B cell (primary cell): ENCODE measurements at regions of chr2 and their contacts with region 1.

Region 1: DNA sequence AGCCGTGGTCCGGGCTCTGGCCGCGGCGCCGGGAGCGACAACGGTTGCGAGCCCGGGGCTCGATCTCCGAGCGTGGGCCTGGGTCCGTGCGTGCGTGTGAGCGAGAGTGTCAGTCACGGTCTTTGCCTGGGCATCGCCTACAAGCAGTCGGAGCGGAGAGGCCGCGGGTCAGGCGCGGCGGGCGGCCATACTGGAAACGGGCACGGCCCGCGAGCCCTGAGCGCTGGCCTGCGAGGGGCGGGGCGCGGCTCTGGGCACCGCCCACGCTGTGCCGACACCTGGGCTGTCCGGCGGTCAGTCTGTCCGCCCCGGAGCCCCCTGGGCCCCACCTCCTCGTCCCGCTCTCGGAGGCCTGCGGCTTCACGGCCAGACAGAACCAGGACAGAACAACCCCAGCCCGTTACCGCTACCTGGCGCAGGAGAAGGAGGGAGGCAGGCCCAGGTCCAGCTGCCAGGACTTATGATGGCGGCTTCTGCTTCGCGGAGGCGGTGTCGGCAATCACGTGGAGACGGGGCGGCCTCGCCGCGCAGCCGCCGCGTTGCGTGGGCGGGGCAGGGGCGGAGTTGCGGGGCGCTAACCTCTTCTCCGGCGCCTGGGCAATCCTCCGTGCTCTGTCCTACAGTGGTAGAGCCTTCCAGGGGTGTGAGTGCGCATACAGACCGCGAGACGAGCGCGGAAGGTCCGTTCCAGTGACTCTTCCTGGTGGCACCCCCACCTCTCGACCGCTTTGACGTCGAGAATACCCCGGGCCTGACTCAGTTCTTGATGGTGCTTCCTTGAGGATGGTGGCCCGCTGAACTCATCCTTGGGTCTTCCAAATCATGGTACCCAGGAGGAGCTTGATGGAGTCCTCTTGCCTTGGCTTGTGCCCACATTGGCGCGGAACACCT is at the start of gene TMEM131:
- DNase-seq: peak; percentile 98
- ATAC-seq: peak; percentile 81
- H3K4me3 ChIP-seq: peak within 1 kb of the TSS; percentile 63 to 89 (median 82)
- H3K4me3 Mint-ChIP-seq: peak within 1 kb of the TSS; percentile 93
- H3K27ac ChIP-seq: peak within 1 kb of the TSS; percentile 82 to 93
- H3K27ac Mint-ChIP-seq: peak within 1 kb of the TSS; percentile 96
- H3K4me1 ChIP-seq: peaks cover 31 to 32% of the 10 kb centered on the region in 2 donors
- H3K4me1 Mint-ChIP-seq: peaks cover 41% of the 10 kb centered on the region
- H3K27me3 ChIP-seq: no peaks in the 10 kb centered on the region
- H3K27me3 Mint-ChIP-seq: no peaks in the 10 kb centered on the region
- CTCF ChIP-seq: no peak
- total RNA-seq, gene TMEM131: 101 and 102 TPM in 2 replicates

Region 2: GRCh38 chr2:97645695-97646629 is 350.0 kb before region 1 on chr2 and contains the start of gene COX5B:
- CTCF ChIA-PET with region 1: no interaction called
- POLR2A ChIA-PET with region 1: no interaction called
- intact Hi-C with region 1: loop called (anchors 5 kb)
- DNase-seq: peak; percentile 98
- ATAC-seq: peak; percentile 98
- H3K4me3 ChIP-seq: peak within 1 kb of the TSS; percentile 61 to 97 (median 97)
- H3K4me3 Mint-ChIP-seq: peak within 1 kb of the TSS; percentile 100
- H3K27ac ChIP-seq: peak within 1 kb of the TSS; percentile 72 to 87
- H3K27ac Mint-ChIP-seq: peak within 1 kb of the TSS; percentile 97
- H3K4me1 ChIP-seq: peaks cover 14 to 15% of the 10 kb centered on the region in 2 donors
- H3K4me1 Mint-ChIP-seq: peaks cover 21% of the 10 kb centered on the region
- H3K27me3 ChIP-seq: no peaks in the 10 kb centered on the region
- H3K27me3 Mint-ChIP-seq: peaks cover 3% of the 10 kb centered on the region
- CTCF ChIP-seq: no peak
- total RNA-seq, gene COX5B: 104 and 111 TPM in 2 replicates

Region 3: DNA sequence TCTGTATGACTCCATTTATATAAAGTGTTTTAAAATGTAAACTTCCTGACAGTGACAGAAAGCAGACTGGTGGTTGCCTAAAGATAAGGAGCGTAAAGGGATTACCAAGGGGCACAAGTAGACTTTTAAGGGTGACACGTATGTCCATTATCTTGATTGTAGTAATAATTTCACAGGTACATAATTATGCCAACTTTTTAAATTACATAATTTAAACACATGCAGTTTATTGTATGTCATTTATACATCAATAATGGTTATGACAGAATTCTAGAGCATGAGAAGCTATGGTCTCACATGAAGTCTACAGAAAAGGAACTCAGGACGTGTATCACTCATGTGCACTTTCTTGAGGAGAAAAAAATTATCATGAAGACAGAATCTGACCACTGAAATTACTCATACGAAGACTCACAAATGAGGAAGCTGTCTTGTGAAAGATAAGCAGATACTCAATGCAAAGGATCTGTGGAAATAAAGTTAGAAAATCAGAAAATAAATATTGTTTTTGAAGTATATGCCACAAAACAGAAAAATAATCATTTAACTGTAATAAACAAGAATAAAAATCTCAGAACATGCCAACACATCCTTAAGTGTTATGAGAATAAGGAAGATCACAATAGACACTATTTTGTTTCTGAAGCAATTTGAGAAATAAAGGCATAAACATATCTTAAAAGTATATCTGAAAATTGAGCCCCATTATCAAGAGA is 84.6 kb before region 1 on chr2:
- CTCF ChIA-PET with region 1: no interaction called
- POLR2A ChIA-PET with region 1: interaction called, 4 read pairs
- intact Hi-C with region 1: loop called (anchors 2 kb)
- DNase-seq: peak; percentile 71
- ATAC-seq: peak; percentile 73
- H3K4me3 ChIP-seq: no peak overlapping the region
- H3K4me3 Mint-ChIP-seq: peak overlapping the region; percentile 17
- H3K27ac ChIP-seq: peak overlapping the region in 1 of 2 donors; percentile 37
- H3K27ac Mint-ChIP-seq: peak overlapping the region; percentile 4
- H3K4me1 ChIP-seq: peaks cover 63 to 73% of the 10 kb centered on the region in 2 donors
- H3K4me1 Mint-ChIP-seq: peaks cover 89% of the 10 kb centered on the region
- H3K27me3 ChIP-seq: no peaks in the 10 kb centered on the region
- H3K27me3 Mint-ChIP-seq: no peaks in the 10 kb centered on the region
- CTCF ChIP-seq: no peak

Region 4: DNA sequence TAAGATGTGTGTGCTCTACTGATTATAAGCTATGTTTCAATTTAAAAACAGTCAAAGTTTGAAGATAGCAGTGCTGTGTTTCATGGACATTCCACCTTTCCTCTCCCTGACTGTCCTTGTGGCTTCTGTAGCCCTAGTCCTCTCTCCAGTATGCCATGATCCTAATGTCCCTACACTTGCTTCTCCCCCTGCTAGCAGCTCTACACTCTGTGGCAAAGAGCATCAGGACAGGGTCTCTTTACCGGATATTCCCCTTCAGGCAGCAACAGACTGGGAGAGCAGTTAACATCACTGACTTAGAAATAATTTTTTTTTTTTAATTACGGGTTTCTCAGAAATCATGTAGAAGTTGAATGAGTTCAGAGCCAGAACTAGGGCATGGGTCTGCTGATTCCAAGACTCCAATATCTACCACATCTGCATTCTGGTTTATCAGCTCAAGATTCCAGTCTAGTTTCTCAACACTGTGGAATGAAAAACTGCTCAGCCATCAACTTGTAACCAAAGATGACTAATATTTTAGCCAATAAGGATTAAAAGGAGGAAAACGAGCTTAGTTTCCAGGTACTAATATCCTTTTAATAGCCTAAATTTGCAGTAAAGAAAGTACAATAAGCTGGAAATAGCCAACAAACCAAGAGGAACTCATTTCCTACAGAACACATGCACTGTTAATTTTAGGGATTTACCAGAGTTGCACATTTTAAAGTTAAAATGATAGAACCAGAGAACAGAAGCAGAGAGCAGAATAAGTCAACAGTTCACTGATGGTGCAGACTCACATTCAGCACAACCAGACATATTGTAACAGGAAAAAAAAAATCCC is 45.4 kb before region 1 on chr2:
- CTCF ChIA-PET with region 1: no interaction called
- POLR2A ChIA-PET with region 1: interaction called, 4 read pairs
- intact Hi-C with region 1: loop called (anchors 5 kb)
- DNase-seq: no peak
- ATAC-seq: no peak
- H3K4me3 ChIP-seq: no peak overlapping the region
- H3K4me3 Mint-ChIP-seq: peak overlapping the region; percentile 11
- H3K27ac ChIP-seq: no peak overlapping the region
- H3K27ac Mint-ChIP-seq: peak overlapping the region; percentile 33
- H3K4me1 ChIP-seq: peaks cover 28 to 54% of the 10 kb centered on the region in 2 donors
- H3K4me1 Mint-ChIP-seq: peaks cover 83% of the 10 kb centered on the region
- H3K27me3 ChIP-seq: no peaks in the 10 kb centered on the region
- H3K27me3 Mint-ChIP-seq: no peaks in the 10 kb centered on the region
- CTCF ChIP-seq: no peak

Region 5: DNA sequence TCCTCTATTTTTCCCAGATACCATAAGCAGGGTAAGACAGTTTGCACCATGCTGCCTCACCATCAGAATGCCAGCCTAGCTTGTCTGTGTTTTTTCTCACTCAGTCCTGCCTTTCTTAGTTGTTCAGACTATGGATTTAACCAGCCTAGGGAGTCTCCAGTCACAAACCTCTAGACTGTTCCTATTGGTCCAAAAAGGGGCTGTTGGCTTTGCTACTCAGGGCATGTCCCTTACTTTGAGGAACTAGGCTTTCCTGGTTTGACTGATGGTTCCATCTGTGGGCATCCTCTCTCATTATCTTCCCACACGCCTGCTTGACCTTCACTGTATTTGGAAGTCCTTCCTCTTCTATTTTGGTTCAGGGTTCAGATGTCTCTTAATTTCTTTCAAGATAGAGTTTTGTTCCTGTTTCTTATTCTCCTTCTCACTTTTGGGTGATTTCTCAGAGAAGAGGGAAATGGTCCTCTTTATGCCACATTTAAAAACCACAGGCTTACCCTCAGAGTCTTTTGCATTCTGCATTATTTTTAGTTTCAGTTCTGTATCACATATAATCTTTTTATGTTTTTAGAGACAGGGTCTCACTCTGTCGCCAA is 31.0 kb after region 1 on chr2:
- CTCF ChIA-PET with region 1: interaction called, 3 read pairs
- POLR2A ChIA-PET with region 1: interaction called, 4 read pairs
- intact Hi-C with region 1: loop called (anchors 1 kb)
- DNase-seq: peak; percentile 84
- ATAC-seq: peak; percentile 77
- H3K4me3 ChIP-seq: peak overlapping the region in 4 of 5 experiments; percentile 7 to 58 (median 35)
- H3K4me3 Mint-ChIP-seq: peak overlapping the region; percentile 84
- H3K27ac ChIP-seq: peak overlapping the region; percentile 80 to 82
- H3K27ac Mint-ChIP-seq: peak overlapping the region; percentile 88
- H3K4me1 ChIP-seq: peaks cover 51 to 67% of the 10 kb centered on the region in 2 donors
- H3K4me1 Mint-ChIP-seq: peaks cover 52% of the 10 kb centered on the region
- H3K27me3 ChIP-seq: no peaks in the 10 kb centered on the region
- H3K27me3 Mint-ChIP-seq: no peaks in the 10 kb centered on the region
- CTCF ChIP-seq: no peak

Region 6: GRCh38 chr2:98134172-98135005 is 138.4 kb after region 1 on chr2:
- CTCF ChIA-PET with region 1: no interaction called
- POLR2A ChIA-PET with region 1: no interaction called
- intact Hi-C with region 1: loop called (anchors 1 kb)
- DNase-seq: peak; percentile 92
- ATAC-seq: peak; percentile 98
- H3K4me3 ChIP-seq: no peak overlapping the region
- H3K4me3 Mint-ChIP-seq: peak overlapping the region; percentile 32
- H3K27ac ChIP-seq: peak overlapping the region in 1 of 2 donors; percentile 31
- H3K27ac Mint-ChIP-seq: peak overlapping the region; percentile 4
- H3K4me1 ChIP-seq: peaks cover 16 to 21% of the 10 kb centered on the region in 2 donors
- H3K4me1 Mint-ChIP-seq: peaks cover 23% of the 10 kb centered on the region
- H3K27me3 ChIP-seq: no peaks in the 10 kb centered on the region
- H3K27me3 Mint-ChIP-seq: no peaks in the 10 kb centered on the region
- CTCF ChIP-seq: no peak